Posterior cingulate gyrus (tissue), 11 donors: ENCODE measurements at regions of chr7 and their contacts with region 1.

Region 1: GRCh38 chr7:86814661-86815379 is 171.1 kb downstream of the GRM3 start:
- DNase-seq: peak in 2 of 10 donors; percentile 4 to 48

Region 2: DNA sequence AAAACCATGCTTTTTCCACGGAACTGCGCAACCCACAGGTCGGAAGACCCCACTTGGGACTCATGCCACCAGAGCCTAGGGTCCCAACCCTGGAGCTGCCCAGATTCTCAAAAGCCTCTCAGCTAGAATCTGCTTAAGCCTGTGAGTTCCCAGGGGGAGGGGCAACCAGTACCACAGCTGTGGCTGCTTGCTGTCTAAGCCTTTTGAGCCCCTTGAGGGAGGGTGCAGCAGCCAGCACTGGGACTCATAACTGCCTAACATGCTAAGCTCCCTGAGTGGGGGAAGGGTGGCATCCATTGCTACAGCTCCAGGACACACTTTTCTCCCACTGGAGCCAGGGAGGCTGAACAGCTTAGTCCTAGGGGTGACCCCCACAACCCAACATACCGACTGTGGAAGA is 656.7 kb before region 1 on chr7:
- intact Hi-C with region 1: no loop called
- DNase-seq: peak in 2 of 10 donors; percentile 21 to 23

Region 3: GRCh38 chr7:86600506-86601290 is 214.1 kb before region 1 on chr7:
- intact Hi-C with region 1: loop called (anchors 2 kb)
- DNase-seq: peak; percentile 58 to 97 (median 72)

Region 4: DNA sequence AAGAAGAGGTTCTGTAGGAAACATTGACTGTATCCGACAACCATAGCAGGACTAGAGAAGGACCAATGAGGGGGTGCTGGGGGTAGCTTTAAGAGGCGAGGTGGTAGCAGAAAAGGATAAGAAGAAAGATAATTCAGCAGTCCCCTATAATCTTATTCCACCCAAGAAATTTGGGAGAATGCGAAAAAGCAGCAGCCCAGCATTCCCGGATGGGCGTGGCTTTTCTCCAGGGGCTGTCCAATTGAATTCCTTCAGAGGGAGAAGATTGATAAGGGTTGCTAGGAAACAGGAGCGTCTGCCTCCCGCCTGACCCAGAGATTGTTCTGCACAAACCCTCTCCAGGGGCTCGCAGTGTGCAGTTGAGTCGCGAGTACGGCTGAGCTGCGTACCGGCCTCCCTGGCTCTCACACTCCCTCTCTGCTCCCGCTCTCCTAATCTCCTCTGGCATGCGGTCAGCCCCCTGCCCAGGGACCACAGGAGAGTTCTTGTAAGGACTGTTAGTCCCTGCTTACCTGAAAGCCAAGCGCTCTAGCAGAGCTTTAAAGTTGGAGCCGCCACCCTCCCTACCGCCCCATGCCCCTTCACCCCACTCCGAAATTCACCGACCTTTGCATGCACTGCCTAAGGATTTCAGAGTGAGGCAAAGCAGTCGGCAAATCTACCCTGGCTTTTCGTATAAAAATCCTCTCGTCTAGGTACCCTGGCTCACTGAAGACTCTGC is 171.1 kb before region 1 on chr7 and contains the start of gene GRM3:
- intact Hi-C with region 1: loop called (anchors 2 kb)
- DNase-seq: peak; percentile 79 to 98 (median 84)